B cell (primary cell): ENCODE measurements at regions of chr11 and their contacts with region 1.

Region 1: DNA sequence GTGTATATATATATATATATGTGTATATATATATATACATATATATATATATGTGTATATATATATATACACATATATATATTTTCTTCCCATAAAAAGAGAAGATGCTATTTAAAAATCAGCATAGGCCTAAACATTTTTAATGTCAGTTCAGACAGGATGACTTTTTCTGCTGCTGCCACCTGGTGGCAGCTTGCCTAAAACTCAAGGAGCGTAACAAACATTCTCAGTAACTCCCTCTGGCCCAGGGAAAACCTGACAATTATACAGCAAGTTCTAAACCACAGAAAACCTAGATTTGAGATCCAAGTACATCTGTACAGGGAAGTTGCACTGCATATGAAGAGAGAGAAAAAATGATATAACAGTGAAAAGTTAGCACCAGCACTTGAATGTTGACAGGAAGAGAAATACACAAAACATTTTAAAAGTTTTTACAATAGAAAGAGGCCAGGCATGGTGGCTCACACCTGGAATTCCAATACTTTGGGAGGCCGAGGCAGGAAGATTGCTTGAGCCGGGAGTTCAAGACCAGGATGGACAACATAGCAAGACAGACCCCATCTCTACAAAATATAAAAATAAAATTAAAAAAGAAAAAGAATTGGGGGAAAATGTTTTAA is 16.6 kb downstream of the OR8A1 start:
- DNase-seq: peak; percentile 68
- ATAC-seq: no peak
- H3K4me3 ChIP-seq: no peak overlapping the region
- H3K4me3 Mint-ChIP-seq: no peak overlapping the region
- H3K27ac ChIP-seq: no peak overlapping the region
- H3K27ac Mint-ChIP-seq: no peak overlapping the region
- H3K4me1 ChIP-seq: no peaks in the 10 kb centered on the region
- H3K4me1 Mint-ChIP-seq: no peaks in the 10 kb centered on the region
- H3K27me3 ChIP-seq: no peaks in the 10 kb centered on the region
- H3K27me3 Mint-ChIP-seq: peaks cover 21% of the 10 kb centered on the region
- CTCF ChIP-seq: peak; percentile 84

Region 2: GRCh38 chr11:124108156-124108555 is 478.2 kb before region 1 on chr11:
- CTCF ChIA-PET with region 1: interaction called, 10 read pairs
- POLR2A ChIA-PET with region 1: no interaction called
- intact Hi-C with region 1: no loop called
- DNase-seq: peak; percentile 42
- ATAC-seq: no peak
- H3K4me3 ChIP-seq: no peak overlapping the region
- H3K4me3 Mint-ChIP-seq: no peak overlapping the region
- H3K27ac ChIP-seq: no peak overlapping the region
- H3K27ac Mint-ChIP-seq: no peak overlapping the region
- H3K4me1 ChIP-seq: peaks cover 9 to 11% of the 10 kb centered on the region in 2 donors
- H3K4me1 Mint-ChIP-seq: peaks cover 20% of the 10 kb centered on the region
- H3K27me3 ChIP-seq: no peaks in the 10 kb centered on the region
- H3K27me3 Mint-ChIP-seq: peaks cover 5% of the 10 kb centered on the region
- CTCF ChIP-seq: peak; percentile 20

Region 3: DNA sequence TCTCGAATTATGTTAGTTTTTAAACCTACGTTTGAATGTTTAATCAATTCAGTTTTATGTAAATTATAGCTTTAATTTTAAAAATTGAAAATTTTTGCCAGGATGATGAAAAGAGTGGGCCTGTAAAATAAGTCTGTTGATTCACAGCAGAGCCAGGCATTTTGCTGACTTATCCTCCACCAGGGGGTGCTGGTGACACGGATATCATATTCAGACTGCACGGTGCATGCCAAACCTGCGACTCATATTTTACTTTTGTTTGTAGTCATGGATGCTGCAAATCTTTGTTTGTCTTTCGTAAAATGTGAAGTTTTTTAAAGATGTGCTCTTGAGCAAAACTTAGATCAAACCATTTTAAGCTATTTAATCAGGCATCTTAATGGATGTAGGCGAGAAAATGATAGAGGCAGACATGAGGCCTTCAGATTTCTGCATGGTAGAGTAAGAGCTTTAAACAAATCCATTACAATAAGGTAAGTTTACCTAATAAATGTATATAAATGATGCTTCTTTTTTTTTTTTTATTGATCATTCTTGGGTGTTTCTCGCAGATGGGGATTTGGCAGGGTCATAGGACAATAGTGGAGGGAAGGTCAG is 183.9 kb before region 1 on chr11:
- CTCF ChIA-PET with region 1: no interaction called
- POLR2A ChIA-PET with region 1: no interaction called
- intact Hi-C with region 1: loop called (anchors 5 kb)
- DNase-seq: peak; percentile 67
- ATAC-seq: peak; percentile 43
- H3K4me3 ChIP-seq: no peak overlapping the region
- H3K4me3 Mint-ChIP-seq: no peak overlapping the region
- H3K27ac ChIP-seq: no peak overlapping the region
- H3K27ac Mint-ChIP-seq: no peak overlapping the region
- H3K4me1 ChIP-seq: peaks cover 0 to 6% of the 10 kb centered on the region in 2 donors
- H3K4me1 Mint-ChIP-seq: peaks cover 8% of the 10 kb centered on the region
- H3K27me3 ChIP-seq: no peaks in the 10 kb centered on the region
- H3K27me3 Mint-ChIP-seq: peaks cover 4% of the 10 kb centered on the region
- CTCF ChIP-seq: peak; percentile 85

Region 4: DNA sequence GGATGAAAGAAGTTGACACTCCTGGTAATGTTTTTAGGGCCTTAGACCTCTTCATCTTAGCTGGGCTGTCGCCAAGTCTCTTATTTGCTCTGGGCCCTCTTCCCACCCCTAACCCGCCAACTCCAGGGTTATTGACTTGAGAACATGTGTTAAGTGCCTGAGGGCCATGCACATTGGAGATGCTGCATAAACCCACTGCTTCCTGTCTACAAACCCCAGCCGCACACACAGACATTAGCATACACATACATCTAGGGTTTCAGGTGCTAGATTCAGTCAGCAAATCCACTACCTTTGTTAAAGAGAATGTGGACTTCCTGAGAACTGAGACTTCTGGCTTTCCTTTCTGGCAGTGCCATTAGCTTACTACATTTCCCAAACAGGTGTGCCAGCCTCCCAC is 25.7 kb after region 1 on chr11:
- CTCF ChIA-PET with region 1: no interaction called
- POLR2A ChIA-PET with region 1: no interaction called
- intact Hi-C with region 1: no loop called
- DNase-seq: no peak
- ATAC-seq: no peak
- H3K4me3 ChIP-seq: no peak overlapping the region
- H3K4me3 Mint-ChIP-seq: no peak overlapping the region
- H3K27ac ChIP-seq: no peak overlapping the region
- H3K27ac Mint-ChIP-seq: no peak overlapping the region
- H3K4me1 ChIP-seq: no peaks in the 10 kb centered on the region
- H3K4me1 Mint-ChIP-seq: no peaks in the 10 kb centered on the region
- H3K27me3 ChIP-seq: peaks cover 0 to 6% (median 0%) of the 10 kb centered on the region in 4 experiments
- H3K27me3 Mint-ChIP-seq: peaks cover 21% of the 10 kb centered on the region
- CTCF ChIP-seq: no peak

Region 5: DNA sequence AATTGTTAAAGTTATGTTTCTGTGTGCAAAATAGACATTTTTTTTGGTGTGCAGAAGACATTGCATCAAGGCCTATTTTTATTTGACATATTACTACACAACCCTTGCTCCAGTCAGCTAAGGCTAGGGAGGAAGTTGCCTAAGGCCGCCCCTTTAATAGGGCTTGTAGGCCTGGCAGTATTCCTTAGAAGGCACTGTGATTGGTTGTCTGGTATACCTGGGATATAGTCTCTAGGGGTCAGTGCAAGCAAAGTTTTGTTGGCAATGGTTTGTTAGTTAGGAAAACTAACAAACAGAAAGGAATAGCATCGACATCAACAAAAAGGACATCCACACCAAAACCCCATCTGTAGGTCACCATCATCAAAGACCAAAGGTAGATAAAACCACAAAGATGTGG is 384.6 kb after region 1 on chr11:
- CTCF ChIA-PET with region 1: no interaction called
- POLR2A ChIA-PET with region 1: no interaction called
- intact Hi-C with region 1: no loop called
- DNase-seq: no peak
- ATAC-seq: no peak
- H3K4me3 ChIP-seq: no peak overlapping the region
- H3K4me3 Mint-ChIP-seq: no peak overlapping the region
- H3K27ac ChIP-seq: no peak overlapping the region
- H3K27ac Mint-ChIP-seq: no peak overlapping the region
- H3K4me1 ChIP-seq: no peaks in the 10 kb centered on the region
- H3K4me1 Mint-ChIP-seq: no peaks in the 10 kb centered on the region
- H3K27me3 ChIP-seq: no peaks in the 10 kb centered on the region
- H3K27me3 Mint-ChIP-seq: no peaks in the 10 kb centered on the region
- CTCF ChIP-seq: no peak